ENCODE measurements at regions of chr13 and their contacts with region 1.

Region 1: DNA sequence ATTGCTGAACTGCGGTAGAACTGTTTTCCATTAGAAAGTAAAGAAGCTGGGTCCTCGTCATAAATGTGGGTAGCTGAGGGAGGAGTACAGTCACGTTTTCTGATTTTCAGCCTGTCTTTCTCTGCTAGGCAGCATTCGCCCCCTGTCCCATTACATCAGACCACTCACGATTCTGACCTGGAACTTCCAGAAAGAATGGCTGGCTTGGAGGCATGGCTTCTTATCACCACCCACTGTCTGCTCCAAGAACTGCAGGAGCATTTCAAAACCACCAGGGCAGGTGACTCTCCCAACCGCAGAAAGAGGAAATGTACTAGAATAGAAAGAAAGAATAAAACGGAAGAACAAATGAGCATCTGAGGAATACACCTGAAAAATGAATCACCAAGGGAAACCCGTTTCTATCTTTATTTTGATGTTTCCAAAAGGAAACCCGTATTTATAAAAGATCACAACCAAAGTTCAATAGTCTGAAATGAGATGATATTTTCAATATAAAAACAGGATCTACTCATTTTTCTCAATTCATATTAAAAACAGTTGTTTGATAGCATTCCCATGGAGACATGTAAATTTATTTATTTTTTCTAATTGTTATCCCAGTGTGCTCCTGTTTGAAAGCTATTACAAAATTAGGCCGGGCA is 22.1 kb upstream of the POMP start:
- DNase-seq: peak; percentile 81
- ATAC-seq: peak; percentile 94
- H3K4me3 Mint-ChIP-seq: peak overlapping the region; percentile 3
- H3K27ac Mint-ChIP-seq: peak overlapping the region; percentile 11
- H3K4me1 Mint-ChIP-seq: peaks cover 16% of the 10 kb centered on the region
- H3K27me3 Mint-ChIP-seq: peaks cover 3% of the 10 kb centered on the region
- CTCF ChIP-seq: peak; percentile 80

Region 2: GRCh38 chr13:28376604-28377003 is 260.2 kb before region 1 on chr13:
- CTCF ChIA-PET with region 1: no interaction called
- POLR2A ChIA-PET with region 1: no interaction called
- intact Hi-C with region 1: no loop called
- DNase-seq: no peak
- ATAC-seq: no peak
- H3K4me3 Mint-ChIP-seq: no peak overlapping the region
- H3K27ac Mint-ChIP-seq: no peak overlapping the region
- H3K4me1 Mint-ChIP-seq: no peaks in the 10 kb centered on the region
- H3K27me3 Mint-ChIP-seq: no peaks in the 10 kb centered on the region
- CTCF ChIP-seq: no peak

Region 3: GRCh38 chr13:28494776-28495537 is 141.8 kb before region 1 on chr13 and contains the start of gene FLT1:
- CTCF ChIA-PET with region 1: no interaction called
- POLR2A ChIA-PET with region 1: no interaction called
- intact Hi-C with region 1: loop called (anchors 10 kb)
- DNase-seq: peak; percentile 59
- ATAC-seq: peak; percentile 57
- H3K4me3 Mint-ChIP-seq: peak within 1 kb of the TSS; percentile 75
- H3K27ac Mint-ChIP-seq: no peak within 1 kb of the TSS
- H3K4me1 Mint-ChIP-seq: peaks cover 24% of the 10 kb centered on the region
- H3K27me3 Mint-ChIP-seq: peaks cover 34% of the 10 kb centered on the region
- CTCF ChIP-seq: no peak
- total RNA-seq, gene FLT1: 7.7 to 8.2 TPM

Region 4: GRCh38 chr13:28666897-28667488 is 30.2 kb after region 1 on chr13:
- CTCF ChIA-PET with region 1: no interaction called
- POLR2A ChIA-PET with region 1: no interaction called
- intact Hi-C with region 1: no loop called
- DNase-seq: no peak
- ATAC-seq: no peak
- H3K4me3 Mint-ChIP-seq: no peak overlapping the region
- H3K27ac Mint-ChIP-seq: peak overlapping the region; percentile 49
- H3K4me1 Mint-ChIP-seq: peaks cover 36% of the 10 kb centered on the region
- H3K27me3 Mint-ChIP-seq: no peaks in the 10 kb centered on the region
- CTCF ChIP-seq: no peak

Measured in activated CD8-positive, alpha-beta T cell treated with anti-CD3 and anti-CD28 coated beads for 36 hours (primary cell).